HCT116 (cell line): ENCODE measurements at regions of chr4 and their contacts with region 1.

Region 1: GRCh38 chr4:18593445-18594002 is 572.0 kb upstream of the LCORL start:
- DNase-seq: peak; percentile 63
- ATAC-seq: peak; percentile 87
- H3K4me3 ChIP-seq: peak overlapping the region in 1 of 2 experiments; percentile 18; a peak in 1 of 4 replicates
- H3K27ac ChIP-seq: no peak overlapping the region
- H3K4me1 ChIP-seq: peaks cover 0 to 4% of the 10 kb centered on the region in 2 experiments; a peak in 1 of 4 replicates
- H3K27me3 ChIP-seq: peaks cover 8% of the 10 kb centered on the region; the same call in 1 of the 2 replicates
- CTCF ChIP-seq: peak; percentile 52 to 88 (median 77); a peak in 5 of 6 replicates
- POLR2A ChIP-seq: no peak
- RAD21 ChIP-seq: peak; percentile 86

Region 2: GRCh38 chr4:17468371-17469221 is 1124.9 kb before region 1 on chr4:
- CTCF ChIA-PET with region 1: no interaction called
- POLR2A ChIA-PET with region 1: no interaction called
- RAD21 ChIA-PET with region 1: no interaction called
- intact Hi-C with region 1: loop called (anchors 5 kb)
- DNase-seq: peak; percentile 12
- ATAC-seq: no peak
- H3K4me3 ChIP-seq: no peak overlapping the region
- H3K27ac ChIP-seq: no peak overlapping the region
- H3K4me1 ChIP-seq: peaks cover 0 to 3% of the 10 kb centered on the region in 2 experiments; a peak in 2 of 4 replicates
- H3K27me3 ChIP-seq: no peaks in the 10 kb centered on the region
- CTCF ChIP-seq: peak; percentile 25 to 44 (median 29); a peak in 4 of 6 replicates
- POLR2A ChIP-seq: no peak
- RAD21 ChIP-seq: peak; percentile 45

Region 3: GRCh38 chr4:17597517-17597916 is 996.0 kb before region 1 on chr4:
- CTCF ChIA-PET with region 1: no interaction called
- POLR2A ChIA-PET with region 1: no interaction called
- RAD21 ChIA-PET with region 1: no interaction called
- intact Hi-C with region 1: loop called (anchors 1 kb)
- DNase-seq: no peak
- ATAC-seq: peak; percentile 92
- H3K4me3 ChIP-seq: no peak overlapping the region
- H3K27ac ChIP-seq: no peak overlapping the region
- H3K4me1 ChIP-seq: no peaks in the 10 kb centered on the region
- H3K27me3 ChIP-seq: no peaks in the 10 kb centered on the region
- CTCF ChIP-seq: peak; percentile 47 to 56 (median 49); a peak in 4 of 6 replicates
- POLR2A ChIP-seq: no peak
- RAD21 ChIP-seq: peak; percentile 61

Region 4: DNA sequence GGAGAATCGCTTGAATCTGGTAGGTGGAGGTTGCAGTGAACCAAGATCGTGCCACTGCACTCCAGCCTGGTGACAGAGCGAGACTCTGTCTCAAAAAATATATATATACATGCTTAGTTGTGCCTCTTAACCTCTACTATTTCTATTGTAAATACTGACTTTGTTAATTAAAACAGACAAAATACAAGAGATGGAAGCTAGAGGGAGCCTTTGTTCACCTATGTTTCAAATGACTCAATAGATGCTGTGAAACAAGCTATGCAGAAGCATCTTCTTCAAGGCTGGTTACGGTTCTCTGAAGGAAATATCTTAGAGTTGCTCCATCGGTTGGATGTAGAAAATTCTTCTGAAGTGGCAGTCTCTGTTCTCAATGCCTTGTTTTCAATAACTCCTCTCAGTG is 776.5 kb before region 1 on chr4:
- CTCF ChIA-PET with region 1: interaction called, 8 read pairs
- POLR2A ChIA-PET with region 1: no interaction called
- RAD21 ChIA-PET with region 1: no interaction called
- intact Hi-C with region 1: loop called (anchors 1 kb)
- DNase-seq: peak; percentile 10
- ATAC-seq: peak; percentile 80
- H3K4me3 ChIP-seq: no peak overlapping the region
- H3K27ac ChIP-seq: no peak overlapping the region
- H3K4me1 ChIP-seq: peaks cover 5 to 9% of the 10 kb centered on the region in 2 experiments; a peak in 2 of 4 replicates
- H3K27me3 ChIP-seq: no peaks in the 10 kb centered on the region
- CTCF ChIP-seq: peak; percentile 30 to 49 (median 31); a peak in 4 of 6 replicates
- POLR2A ChIP-seq: no peak
- RAD21 ChIP-seq: peak; percentile 50

Region 5: DNA sequence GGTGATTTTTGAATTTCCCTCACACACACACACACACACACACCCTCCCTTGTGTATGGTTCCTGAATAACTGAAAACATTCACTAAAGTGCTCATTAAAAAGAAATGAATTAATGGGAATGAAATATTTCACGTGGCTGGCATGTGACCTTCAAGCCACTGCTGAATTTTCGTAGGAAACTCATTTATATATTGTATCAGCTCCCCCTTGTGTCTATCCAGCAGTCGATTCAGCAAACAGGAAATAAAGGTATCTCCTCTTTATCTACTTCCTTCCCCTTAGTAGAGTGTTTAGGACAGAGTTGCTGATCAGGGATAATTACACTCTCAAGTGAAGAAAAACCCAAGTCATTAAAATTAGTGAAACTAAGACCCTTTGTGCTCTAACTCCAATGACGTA is 340.7 kb after region 1 on chr4:
- CTCF ChIA-PET with region 1: no interaction called
- POLR2A ChIA-PET with region 1: no interaction called
- RAD21 ChIA-PET with region 1: no interaction called
- intact Hi-C with region 1: no loop called
- DNase-seq: no peak
- ATAC-seq: peak; percentile 58
- H3K4me3 ChIP-seq: no peak overlapping the region
- H3K27ac ChIP-seq: no peak overlapping the region
- H3K4me1 ChIP-seq: no peaks in the 10 kb centered on the region
- H3K27me3 ChIP-seq: no peaks in the 10 kb centered on the region
- CTCF ChIP-seq: 0 out of 6 replicates have a peak, but pooled peaks have one; percentile 1 to 28 (median 7)
- POLR2A ChIP-seq: no peak
- RAD21 ChIP-seq: peak; percentile 40; the same call in 1 of the 2 replicates